ENCODE measurements at regions of chr2 and their contacts with region 1.

Region 1: GRCh38 chr2:190718652-190719526 is 70.0 kb downstream of the NAB1 start:
- DNase-seq: peak; percentile 97
- ATAC-seq: peak; percentile 91
- H3K4me3 ChIP-seq: peak overlapping the region; percentile 39; the same call in 1 of the 2 replicates
- H3K27ac ChIP-seq: peak overlapping the region; percentile 96
- H3K4me1 ChIP-seq: peaks cover 51% of the 10 kb centered on the region
- H3K27me3 ChIP-seq: no peaks in the 10 kb centered on the region
- CTCF ChIP-seq: no peak

Region 2: DNA sequence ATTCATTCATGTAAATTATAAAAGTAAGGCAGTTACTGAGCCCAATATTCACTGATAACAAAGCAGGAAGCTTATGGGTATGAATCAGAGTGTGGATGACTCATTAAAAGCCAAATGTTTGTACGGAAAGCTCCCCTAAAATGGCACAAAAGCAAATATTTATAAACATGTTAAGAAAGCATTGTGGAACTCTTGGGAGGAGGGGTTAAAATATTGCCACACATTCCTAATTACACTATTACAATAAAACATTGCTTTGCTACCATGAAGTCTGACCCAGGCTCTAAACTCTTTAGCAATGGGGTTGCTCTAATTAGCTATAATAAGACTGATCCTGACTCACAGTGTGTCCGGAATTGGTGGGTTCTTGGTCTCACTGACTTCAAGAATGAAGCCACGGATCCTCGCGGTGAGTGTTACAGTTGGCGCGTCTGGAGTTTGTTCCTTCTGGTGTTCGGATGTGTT is 40.9 kb after region 1 on chr2:
- CTCF ChIA-PET with region 1: interaction called, 3 read pairs
- POLR2A ChIA-PET with region 1: no interaction called
- intact Hi-C with region 1: loop called (anchors 5 kb)
- DNase-seq: peak; percentile 93
- ATAC-seq: peak; percentile 61
- H3K4me3 ChIP-seq: no peak overlapping the region
- H3K27ac ChIP-seq: 0 out of 2 replicates have a peak overlapping the region, but pooled peaks have one; percentile 23
- H3K4me1 ChIP-seq: peaks cover 23% of the 10 kb centered on the region
- H3K27me3 ChIP-seq: no peaks in the 10 kb centered on the region
- CTCF ChIP-seq: no peak

Measured in PC-3 (cell line).